Activated CD8-positive, alpha-beta memory T cell treated with anti-CD3 and anti-CD28 coated beads, Interleukin-2, amount 10 ng/mL, durations not matched to agents 7 days and 5 days (primary cell): ENCODE measurements at regions of chr3 and their contacts with region 1.

Region 1: GRCh38 chr3:46214751-46215352 is 6.7 kb upstream of the CCR1 start:
- DNase-seq: peak; percentile 72
- ATAC-seq: peak; percentile 60
- H3K4me3 Mint-ChIP-seq: no peak overlapping the region
- H3K27ac Mint-ChIP-seq: no peak overlapping the region
- H3K4me1 Mint-ChIP-seq: peaks cover 32% of the 10 kb centered on the region
- H3K27me3 Mint-ChIP-seq: peaks cover 3% of the 10 kb centered on the region

Region 2: DNA sequence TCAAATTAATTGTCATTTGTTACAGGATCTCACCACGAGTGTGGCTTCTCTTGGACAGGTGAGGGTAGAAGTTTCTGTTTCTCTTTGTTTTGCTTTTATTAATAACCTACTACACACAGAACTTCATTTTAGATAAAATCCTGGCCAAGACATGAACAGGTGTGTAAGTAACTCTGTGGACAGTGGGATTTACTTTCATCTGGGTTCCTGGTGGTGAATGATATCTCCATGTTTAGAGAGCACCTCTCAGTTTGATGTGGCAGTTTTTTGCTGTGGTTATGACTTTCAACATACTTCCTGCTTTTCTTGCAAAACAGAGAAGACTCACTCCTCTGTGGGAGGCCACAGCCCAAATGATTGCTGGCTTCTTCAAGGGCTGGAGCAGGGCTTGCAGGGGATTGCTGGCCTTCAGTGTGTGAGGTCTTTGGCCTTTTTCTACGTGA is 116.5 kb before region 1 on chr3:
- CTCF ChIA-PET with region 1: interaction called, 94 read pairs
- DNase-seq: peak; percentile 90
- ATAC-seq: peak; percentile 69
- H3K4me3 Mint-ChIP-seq: peak overlapping the region; percentile 22
- H3K27ac Mint-ChIP-seq: peak overlapping the region; percentile 96
- H3K4me1 Mint-ChIP-seq: peaks cover 83% of the 10 kb centered on the region
- H3K27me3 Mint-ChIP-seq: no peaks in the 10 kb centered on the region

Region 3: DNA sequence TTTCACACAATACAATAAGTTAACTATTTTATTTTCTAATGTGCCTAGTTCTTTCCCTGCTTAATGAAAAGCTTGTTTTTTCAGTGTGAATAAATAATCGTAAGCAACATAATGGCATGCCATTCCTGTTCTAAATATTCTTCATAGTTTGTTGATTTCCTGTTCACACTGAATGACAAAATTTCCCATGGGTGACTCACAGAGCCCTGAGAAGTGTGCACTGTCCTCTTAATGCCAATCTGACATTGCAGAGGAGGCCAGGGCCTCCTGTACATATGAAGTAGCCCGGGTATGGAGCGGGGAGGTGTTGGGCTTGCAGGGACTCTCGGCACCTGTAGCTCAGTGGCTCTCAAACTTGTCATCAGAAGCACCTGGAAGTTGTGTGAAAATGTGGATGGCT is 51.7 kb after region 1 on chr3:
- CTCF ChIA-PET with region 1: interaction called, 25 read pairs
- DNase-seq: no peak
- ATAC-seq: no peak
- H3K4me3 Mint-ChIP-seq: no peak overlapping the region
- H3K27ac Mint-ChIP-seq: no peak overlapping the region
- H3K4me1 Mint-ChIP-seq: peaks cover 73% of the 10 kb centered on the region
- H3K27me3 Mint-ChIP-seq: peaks cover 4% of the 10 kb centered on the region

Region 4: DNA sequence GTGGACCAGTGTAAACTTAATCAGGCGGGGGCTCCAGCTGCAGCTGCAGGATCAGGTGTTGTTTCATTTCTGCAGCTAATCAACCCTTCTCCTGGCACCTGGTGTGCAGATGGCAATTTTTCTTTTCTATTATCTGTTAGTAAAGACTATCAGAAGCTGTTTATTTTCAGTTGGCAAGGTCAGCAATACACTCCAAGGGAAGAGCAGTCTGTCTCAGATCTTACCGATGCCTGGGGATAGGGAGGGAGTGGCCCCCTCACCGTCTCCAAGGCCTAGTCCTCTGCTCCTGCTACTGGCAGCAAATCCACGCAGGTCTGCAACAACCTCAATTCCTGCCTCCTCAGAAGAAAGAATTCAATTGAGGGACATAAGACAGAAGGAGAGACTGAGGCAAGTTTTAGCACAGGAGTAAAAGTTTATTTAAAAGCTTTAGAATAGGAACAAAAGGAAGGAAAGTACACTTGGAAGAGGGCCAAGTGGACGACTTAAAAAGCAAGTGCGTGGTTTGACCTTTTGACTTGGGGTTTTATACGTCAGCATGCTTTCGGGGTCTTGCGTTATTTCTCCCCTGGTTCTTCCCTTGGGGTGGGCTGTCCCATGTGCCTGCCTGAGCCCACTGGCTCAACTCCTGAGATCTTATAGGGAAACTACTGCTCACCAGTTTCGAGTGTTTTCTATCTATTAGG is 201.4 kb after region 1 on chr3:
- CTCF ChIA-PET with region 1: no interaction called
- DNase-seq: no peak
- ATAC-seq: no peak
- H3K4me3 Mint-ChIP-seq: no peak overlapping the region
- H3K27ac Mint-ChIP-seq: no peak overlapping the region
- H3K4me1 Mint-ChIP-seq: peaks cover 16% of the 10 kb centered on the region
- H3K27me3 Mint-ChIP-seq: no peaks in the 10 kb centered on the region